CD8-positive, alpha-beta T cell (primary cell): ENCODE measurements at regions of chr2 and their contacts with region 1.

Region 1: DNA sequence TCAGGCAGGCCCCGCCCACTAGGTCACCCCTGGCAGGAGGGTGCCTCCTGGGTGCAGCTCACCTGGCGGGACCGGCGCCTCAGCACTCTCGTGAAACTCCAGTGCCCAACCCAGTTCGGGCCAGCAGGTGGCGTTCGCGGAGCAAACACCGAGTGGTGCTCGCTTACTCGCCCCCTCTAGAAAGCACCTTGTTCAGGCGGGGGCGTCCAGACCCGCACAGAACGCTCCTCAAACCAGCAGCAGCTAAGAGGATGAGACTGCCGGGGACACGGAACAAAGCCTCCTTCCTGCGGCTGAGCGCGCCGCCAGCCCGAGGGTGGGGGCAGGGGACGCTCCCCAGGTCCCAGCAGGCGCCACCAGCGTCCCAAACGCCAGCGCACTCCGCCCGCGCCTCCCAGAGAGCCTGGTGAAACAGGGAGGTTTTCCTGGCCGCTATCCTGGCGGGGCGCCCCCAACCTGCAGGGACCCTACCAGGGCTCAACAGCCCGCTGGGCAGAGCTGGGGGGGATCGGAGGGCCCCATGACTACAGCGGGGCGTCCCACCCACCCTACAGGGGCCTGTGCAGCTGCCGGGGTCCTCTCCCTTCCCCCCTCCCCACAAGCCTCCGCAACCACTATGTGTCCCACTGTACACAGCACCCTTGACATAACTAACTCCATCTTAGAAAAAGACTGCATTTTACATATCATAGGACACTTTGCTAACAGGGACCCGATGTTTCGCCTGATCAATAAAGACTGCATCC is 44.7 kb downstream of the MRPS5 start:
- DNase-seq: peak; percentile 71 to 95 (median 90)
- ATAC-seq: peak; percentile 82
- H3K4me3 ChIP-seq: peak overlapping the region; percentile 33 to 64
- H3K4me3 Mint-ChIP-seq: peak overlapping the region; percentile 83
- H3K27ac ChIP-seq: no peak overlapping the region
- H3K27ac Mint-ChIP-seq: peak overlapping the region; percentile 97
- H3K4me1 ChIP-seq: peaks cover 71% of the 10 kb centered on the region
- H3K4me1 Mint-ChIP-seq: peaks cover 72% of the 10 kb centered on the region
- H3K27me3 ChIP-seq: no peaks in the 10 kb centered on the region
- H3K27me3 Mint-ChIP-seq: no peaks in the 10 kb centered on the region
- CTCF ChIP-seq: peak; percentile 80

Region 2: GRCh38 chr2:95022309-95023221 is 54.4 kb before region 1 on chr2:
- CTCF ChIA-PET with region 1: interaction called, 482 read pairs
- POLR2A ChIA-PET with region 1: interaction called, 323 read pairs
- intact Hi-C with region 1: loop called (anchors 1 kb)
- DNase-seq: peak; percentile 67 to 90 (median 81)
- ATAC-seq: peak; percentile 79
- H3K4me3 ChIP-seq: no peak overlapping the region
- H3K4me3 Mint-ChIP-seq: peak overlapping the region; percentile 85
- H3K27ac ChIP-seq: no peak overlapping the region
- H3K27ac Mint-ChIP-seq: peak overlapping the region; percentile 88
- H3K4me1 ChIP-seq: peaks cover 35% of the 10 kb centered on the region
- H3K4me1 Mint-ChIP-seq: peaks cover 41% of the 10 kb centered on the region
- H3K27me3 ChIP-seq: peaks cover 0 to 5% of the 10 kb centered on the region in 2 experiments
- H3K27me3 Mint-ChIP-seq: no peaks in the 10 kb centered on the region
- CTCF ChIP-seq: peak; percentile 66

Region 3: GRCh38 chr2:95043300-95044093 is 33.5 kb before region 1 on chr2:
- CTCF ChIA-PET with region 1: interaction called, 21 read pairs
- POLR2A ChIA-PET with region 1: interaction called, 3 read pairs
- intact Hi-C with region 1: no loop called
- DNase-seq: peak in 1 of 9 experiments; percentile 35
- ATAC-seq: no peak
- H3K4me3 ChIP-seq: no peak overlapping the region
- H3K4me3 Mint-ChIP-seq: no peak overlapping the region
- H3K27ac ChIP-seq: no peak overlapping the region
- H3K27ac Mint-ChIP-seq: peak overlapping the region; percentile 82
- H3K4me1 ChIP-seq: peaks cover 75% of the 10 kb centered on the region
- H3K4me1 Mint-ChIP-seq: peaks cover 80% of the 10 kb centered on the region
- H3K27me3 ChIP-seq: no peaks in the 10 kb centered on the region
- H3K27me3 Mint-ChIP-seq: no peaks in the 10 kb centered on the region
- CTCF ChIP-seq: no peak

Region 4: DNA sequence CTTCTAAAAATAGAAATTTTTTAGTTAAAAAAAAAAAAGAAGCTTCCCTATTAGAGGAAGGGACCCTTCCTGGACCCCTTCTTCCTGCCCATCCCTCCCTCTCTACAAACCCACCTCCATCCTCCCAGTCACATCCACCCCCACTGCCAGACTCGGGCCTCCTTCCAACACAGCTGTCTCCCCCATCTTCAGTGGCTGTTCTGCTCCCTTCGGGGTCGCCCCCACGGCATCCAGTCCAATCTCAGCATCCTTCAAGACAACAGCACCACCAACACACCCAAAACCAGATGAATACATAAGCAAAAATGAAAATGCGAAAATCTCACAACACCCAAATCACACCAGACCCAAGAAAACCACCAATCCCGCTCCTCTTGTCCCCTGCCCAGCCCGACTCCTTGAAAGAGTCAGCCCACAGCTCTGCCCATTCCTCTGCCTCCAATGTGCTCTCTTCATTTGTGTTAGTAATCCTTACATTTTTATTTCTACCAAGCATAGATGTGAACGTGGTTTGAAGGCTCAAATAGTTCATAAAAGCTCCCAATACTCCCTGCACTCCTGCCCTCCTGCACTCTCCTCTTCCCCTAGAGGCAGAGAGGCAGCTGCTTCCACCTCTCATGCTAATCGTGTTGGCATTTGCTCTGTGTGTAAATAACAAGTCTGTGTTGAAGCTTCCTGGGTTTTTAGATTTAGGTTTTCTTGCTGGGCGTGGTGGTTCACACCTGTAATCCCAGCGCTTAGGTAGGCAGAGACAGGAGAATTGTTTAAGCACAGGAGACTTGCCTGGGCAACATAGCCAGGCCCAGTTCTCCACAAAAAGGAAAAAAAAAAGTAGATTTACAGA is 14.5 kb before region 1 on chr2:
- CTCF ChIA-PET with region 1: interaction called, 226 read pairs
- POLR2A ChIA-PET with region 1: interaction called, 67 read pairs
- intact Hi-C with region 1: no loop called
- DNase-seq: peak in 1 of 9 experiments; percentile 47
- ATAC-seq: no peak
- H3K4me3 ChIP-seq: no peak overlapping the region
- H3K4me3 Mint-ChIP-seq: peak overlapping the region; percentile 52
- H3K27ac ChIP-seq: no peak overlapping the region
- H3K27ac Mint-ChIP-seq: peak overlapping the region; percentile 82
- H3K4me1 ChIP-seq: peaks cover 22% of the 10 kb centered on the region
- H3K4me1 Mint-ChIP-seq: peaks cover 29% of the 10 kb centered on the region
- H3K27me3 ChIP-seq: no peaks in the 10 kb centered on the region
- H3K27me3 Mint-ChIP-seq: no peaks in the 10 kb centered on the region
- CTCF ChIP-seq: no peak

Region 5: GRCh38 chr2:95115418-95115817 is 38.5 kb after region 1 on chr2:
- CTCF ChIA-PET with region 1: interaction called, 133 read pairs
- POLR2A ChIA-PET with region 1: interaction called, 5 read pairs
- intact Hi-C with region 1: loop called (anchors 1 to 2 kb)
- DNase-seq: peak; percentile 46 to 82 (median 76)
- ATAC-seq: peak; percentile 97
- H3K4me3 ChIP-seq: no peak overlapping the region
- H3K4me3 Mint-ChIP-seq: no peak overlapping the region
- H3K27ac ChIP-seq: no peak overlapping the region
- H3K27ac Mint-ChIP-seq: peak overlapping the region; percentile 28
- H3K4me1 ChIP-seq: peaks cover 28% of the 10 kb centered on the region
- H3K4me1 Mint-ChIP-seq: peaks cover 42% of the 10 kb centered on the region
- H3K27me3 ChIP-seq: no peaks in the 10 kb centered on the region
- H3K27me3 Mint-ChIP-seq: no peaks in the 10 kb centered on the region
- CTCF ChIP-seq: peak; percentile 90

Region 6: DNA sequence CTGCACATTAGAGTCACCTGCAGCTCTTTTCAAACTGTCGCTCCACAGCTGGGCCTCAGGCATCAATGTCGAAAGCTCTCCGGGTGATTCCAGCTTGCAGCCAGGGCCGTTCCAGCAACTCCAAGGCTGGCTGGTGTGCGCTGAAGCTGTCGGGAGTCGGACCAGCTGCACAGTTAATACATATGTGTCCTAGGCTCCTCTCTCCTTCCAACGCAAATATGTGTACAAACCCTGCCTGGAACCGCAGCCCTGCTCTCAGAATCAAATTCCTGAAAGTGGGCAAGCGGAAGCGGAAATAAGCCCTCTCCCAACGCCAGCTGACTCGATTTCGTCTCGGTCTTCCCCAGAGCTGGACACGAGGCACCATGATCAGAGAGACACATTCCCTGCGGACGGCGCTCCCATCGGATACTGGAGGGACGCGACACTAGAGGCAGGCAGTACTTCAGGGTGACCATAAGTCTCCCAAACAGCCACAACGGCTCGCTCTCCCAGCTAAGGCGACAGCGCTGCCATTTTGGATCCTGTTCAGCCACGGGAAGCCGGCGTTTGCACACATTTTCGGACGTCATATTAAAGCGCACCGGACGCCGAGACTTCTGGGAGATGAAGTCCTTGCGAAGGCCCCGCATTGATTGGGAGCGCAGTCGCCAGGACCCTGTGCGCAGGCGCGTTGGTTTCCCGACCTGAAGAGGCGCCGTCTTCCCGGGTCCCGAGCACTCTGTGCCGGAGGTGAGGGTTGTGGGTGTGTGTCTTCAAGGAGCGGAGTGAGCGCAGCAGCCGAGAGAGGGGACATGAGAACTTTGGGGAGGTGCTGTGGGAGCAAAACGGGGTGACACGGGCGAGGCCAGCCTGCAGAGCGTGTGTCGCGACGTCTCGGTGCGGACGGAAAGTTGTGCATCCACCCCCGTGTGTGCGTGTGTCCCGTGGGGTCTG is 88.4 kb after region 1 on chr2 and contains the start of gene ZNF2:
- CTCF ChIA-PET with region 1: interaction called, 3 read pairs
- POLR2A ChIA-PET with region 1: no interaction called
- intact Hi-C with region 1: loop called in 1 of 2 experiments (anchors 2 kb)
- DNase-seq: peak; percentile 91 to 99 (median 98)
- ATAC-seq: peak; percentile 94
- H3K4me3 ChIP-seq: peak within 1 kb of the TSS; percentile 98
- H3K4me3 Mint-ChIP-seq: peak within 1 kb of the TSS; percentile 99
- H3K27ac ChIP-seq: peak within 1 kb of the TSS; percentile 90 to 96
- H3K27ac Mint-ChIP-seq: peak within 1 kb of the TSS; percentile 96
- H3K4me1 ChIP-seq: peaks cover 18% of the 10 kb centered on the region
- H3K4me1 Mint-ChIP-seq: peaks cover 41% of the 10 kb centered on the region
- H3K27me3 ChIP-seq: no peaks in the 10 kb centered on the region
- H3K27me3 Mint-ChIP-seq: no peaks in the 10 kb centered on the region
- CTCF ChIP-seq: no peak
- total RNA-seq, gene ZNF2: 0.25 to 0.27 TPM